HEK293 (cell line): ENCODE measurements at regions of chr1 and their contacts with region 1.

Region 1: GRCh38 chr1:44747878-44748277 is 8.2 kb downstream of the KIF2C start:
- H3K4me3 ChIP-seq: no peak overlapping the region
- H3K27ac ChIP-seq: no peak overlapping the region
- H3K4me1 ChIP-seq: no peaks in the 10 kb centered on the region
- CTCF ChIP-seq: no peak

Region 2: GRCh38 chr1:44730741-44731512 is 17.0 kb before region 1 on chr1 and contains the start of gene RNU5D-1:
- CTCF ChIA-PET with region 1: interaction called, 12 read pairs
- POLR2A ChIA-PET with region 1: no interaction called
- H3K4me3 ChIP-seq: no peak within 1 kb of the TSS; the same call in 1 of the 2 replicates
- H3K27ac ChIP-seq: peak within 1 kb of the TSS; percentile 94
- H3K4me1 ChIP-seq: no peaks in the 10 kb centered on the region
- CTCF ChIP-seq: peak; percentile 72; the same call in 1 of the 2 replicates